ENCODE measurements at regions of chr4 and their contacts with region 1.

Region 1: DNA sequence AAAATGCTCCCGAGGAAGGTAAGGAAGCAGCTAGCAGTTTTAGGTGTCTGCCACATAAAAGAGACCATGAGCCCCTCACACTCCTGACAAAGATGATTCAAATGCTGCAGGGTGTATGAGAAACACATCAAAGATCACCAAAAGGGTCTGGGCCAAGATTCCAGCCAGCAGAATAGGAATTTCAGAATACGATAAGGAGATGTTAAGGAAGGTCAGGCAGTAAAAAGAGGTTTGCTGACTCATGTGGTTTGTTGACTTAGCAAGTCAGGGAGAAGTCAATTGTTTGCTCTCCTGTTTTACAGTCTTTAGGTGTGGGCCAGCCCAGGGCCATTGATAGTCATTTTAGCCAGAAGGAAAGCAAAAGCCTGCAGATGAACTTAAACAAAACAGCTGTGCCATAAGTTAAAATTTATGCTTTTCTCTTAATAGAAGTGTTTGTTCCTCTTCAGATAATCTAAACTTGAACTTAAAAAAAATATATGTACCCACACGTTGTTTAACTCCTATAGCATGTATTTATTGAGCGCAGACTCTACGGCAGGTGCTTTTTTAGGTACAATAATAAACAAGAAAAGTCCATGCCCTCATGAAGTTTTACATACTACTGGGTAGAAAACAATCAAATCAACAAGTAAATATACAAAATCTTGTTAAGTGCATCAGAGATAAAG is 115.6 kb downstream of the CAMK2D start:
- DNase-seq: peak; percentile 89
- H3K4me3 ChIP-seq: no peak overlapping the region
- H3K27ac ChIP-seq: no peak overlapping the region
- H3K4me1 ChIP-seq: peaks cover 11% of the 10 kb centered on the region
- H3K27me3 ChIP-seq: no peaks in the 10 kb centered on the region
- CTCF ChIP-seq: no peak
- POLR2A ChIP-seq: no peak

Region 2: GRCh38 chr4:113292371-113293042 is 353.4 kb before region 1 on chr4:
- CTCF ChIA-PET with region 1: no interaction called
- POLR2A ChIA-PET with region 1: no interaction called
- dilution Hi-C with region 1: no loop called
- intact Hi-C with region 1: loop called (anchors 10 kb)
- DNase-seq: no peak
- H3K4me3 ChIP-seq: no peak overlapping the region
- H3K27ac ChIP-seq: no peak overlapping the region
- H3K4me1 ChIP-seq: no peaks in the 10 kb centered on the region
- H3K27me3 ChIP-seq: peaks cover 0 to 3% of the 10 kb centered on the region in 2 experiments
- CTCF ChIP-seq: no peak
- POLR2A ChIP-seq: no peak

Region 3: GRCh38 chr4:113623274-113623894 is 22.5 kb before region 1 on chr4:
- CTCF ChIA-PET with region 1: no interaction called
- POLR2A ChIA-PET with region 1: no interaction called
- dilution Hi-C with region 1: no loop called
- intact Hi-C with region 1: no loop called
- DNase-seq: no peak
- H3K4me3 ChIP-seq: no peak overlapping the region
- H3K27ac ChIP-seq: no peak overlapping the region
- H3K4me1 ChIP-seq: no peaks in the 10 kb centered on the region
- H3K27me3 ChIP-seq: no peaks in the 10 kb centered on the region
- CTCF ChIP-seq: no peak
- POLR2A ChIP-seq: no peak